SK-N-SH (cell line): ENCODE measurements at regions of chr14 and their contacts with region 1.

Region 1: DNA sequence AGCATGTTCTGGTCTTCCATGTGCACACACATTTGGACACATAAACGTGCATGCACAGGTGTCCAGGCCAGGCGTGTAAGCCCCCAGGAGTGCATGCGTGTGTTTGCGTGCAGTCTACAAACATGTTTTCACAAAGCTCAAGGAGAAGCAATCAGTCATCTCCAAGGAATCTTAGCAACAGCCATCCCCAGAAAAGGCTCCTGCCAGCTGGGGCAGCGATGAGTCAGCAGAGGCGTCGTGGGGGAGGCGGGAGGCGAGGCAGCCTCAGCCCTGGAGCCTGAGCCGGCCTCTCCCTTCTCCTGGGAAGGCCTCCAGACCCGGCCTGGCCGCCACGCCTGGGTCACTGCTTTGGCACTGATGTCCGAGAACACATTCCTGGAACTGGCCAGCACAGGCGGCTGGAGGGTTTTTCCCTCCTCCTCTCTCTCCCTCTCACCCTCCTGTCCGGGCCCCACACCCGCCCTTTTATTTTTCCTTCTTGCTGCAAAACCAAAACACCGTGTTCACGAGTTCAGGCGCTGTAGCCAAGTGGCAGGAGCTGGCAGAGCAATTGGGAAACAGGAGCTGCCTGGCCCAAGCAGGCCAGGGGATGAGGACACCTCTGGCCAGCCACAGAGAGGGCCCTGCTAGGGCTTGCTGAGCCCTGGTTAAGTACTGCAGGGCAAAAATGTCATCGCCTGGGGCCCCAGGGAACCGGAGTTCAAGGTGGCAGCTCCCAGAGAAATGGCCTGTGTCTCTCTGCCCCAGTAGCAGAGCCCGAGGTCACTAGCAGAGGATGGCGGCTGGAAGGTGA is 92.7 kb downstream of the LRRC74A start:
- DNase-seq: peak; percentile 74
- H3K4me3 ChIP-seq: peak overlapping the region; percentile 15 to 47; a peak in 3 of 4 replicates
- H3K27ac ChIP-seq: peak overlapping the region; percentile 100
- H3K4me1 ChIP-seq: peaks cover 67 to 73% of the 10 kb centered on the region in 2 experiments
- H3K27me3 ChIP-seq: no peaks in the 10 kb centered on the region
- CTCF ChIP-seq: peak; percentile 22
- EP300 ChIP-seq: peak; percentile 62 to 90; a peak in 3 of 4 replicates
- RAD21 ChIP-seq: peak; percentile 41

Region 2: DNA sequence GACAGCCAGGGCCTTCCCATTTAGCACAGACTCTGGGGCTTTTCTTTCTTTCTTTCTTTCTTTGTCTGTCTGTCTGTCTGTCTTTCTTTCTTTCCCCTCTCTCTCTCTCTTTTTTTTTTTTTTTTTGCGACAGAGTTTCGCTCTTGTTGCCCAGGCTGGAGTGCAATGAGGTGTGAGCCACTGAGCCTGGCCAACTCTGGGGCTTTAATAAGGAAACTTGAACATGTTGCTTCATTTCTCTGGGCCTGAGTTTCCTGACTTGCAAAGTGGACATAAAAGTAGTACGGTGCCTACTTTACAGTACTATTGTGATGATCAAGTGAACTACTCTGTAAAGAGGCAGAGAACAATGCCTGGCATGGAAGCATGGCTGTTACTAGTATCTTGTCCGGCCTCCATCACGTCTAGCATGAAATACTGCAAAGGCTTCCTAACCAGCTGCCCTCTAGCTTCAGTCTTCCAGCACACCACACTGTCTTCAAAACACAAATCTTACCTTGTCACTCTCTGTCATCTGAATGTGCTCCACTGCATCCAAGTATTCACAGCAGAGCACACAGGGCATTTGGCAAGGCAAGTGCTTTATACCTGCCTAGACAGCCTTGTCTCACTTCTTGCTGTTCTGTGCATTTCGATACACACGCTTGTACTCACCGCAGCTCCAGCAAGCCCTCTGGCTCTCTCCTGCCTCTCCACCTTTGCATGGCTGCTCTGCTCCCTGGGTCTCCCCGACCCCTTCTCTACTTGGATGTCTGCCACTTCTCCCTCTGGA is 12.9 kb after region 1 on chr14:
- CTCF ChIA-PET with region 1: interaction called, 133 read pairs
- POLR2A ChIA-PET with region 1: interaction called, 20 read pairs
- DNase-seq: no peak
- H3K4me3 ChIP-seq: no peak overlapping the region
- H3K27ac ChIP-seq: peak overlapping the region in 1 of 2 experiments; percentile 34; a peak in 1 of 4 replicates
- H3K4me1 ChIP-seq: peaks cover 26 to 45% of the 10 kb centered on the region in 2 experiments; a peak in 3 of 4 replicates
- H3K27me3 ChIP-seq: no peaks in the 10 kb centered on the region
- CTCF ChIP-seq: no peak
- EP300 ChIP-seq: no peak
- RAD21 ChIP-seq: no peak

Region 3: GRCh38 chr14:76956316-76957090 is 37.6 kb after region 1 on chr14:
- CTCF ChIA-PET with region 1: interaction called, 45 read pairs
- POLR2A ChIA-PET with region 1: interaction called, 36 read pairs
- DNase-seq: peak; percentile 91
- H3K4me3 ChIP-seq: peak overlapping the region; percentile 25 to 38; a peak in 3 of 4 replicates
- H3K27ac ChIP-seq: peak overlapping the region; percentile 98 to 99
- H3K4me1 ChIP-seq: peaks cover 68 to 71% of the 10 kb centered on the region in 2 experiments
- H3K27me3 ChIP-seq: no peaks in the 10 kb centered on the region
- CTCF ChIP-seq: 0 out of 2 replicates have a peak, but pooled peaks have one; percentile 8
- EP300 ChIP-seq: peak; percentile 82 to 93; a peak in 3 of 4 replicates
- RAD21 ChIP-seq: 0 out of 2 replicates have a peak, but pooled peaks have one; percentile 9

Region 4: GRCh38 chr14:77028384-77029231 is 109.7 kb after region 1 on chr14 and contains the start of gene IRF2BPL:
- CTCF ChIA-PET with region 1: interaction called, 484 read pairs
- POLR2A ChIA-PET with region 1: interaction called, 41 read pairs
- DNase-seq: peak; percentile 97
- H3K4me3 ChIP-seq: peak within 1 kb of the TSS; percentile 77 to 84
- H3K27ac ChIP-seq: peak within 1 kb of the TSS; percentile 96 to 99
- H3K4me1 ChIP-seq: peaks cover 36 to 41% of the 10 kb centered on the region in 2 experiments
- H3K27me3 ChIP-seq: no peaks in the 10 kb centered on the region
- CTCF ChIP-seq: no peak
- EP300 ChIP-seq: peak; percentile 79; a peak in 3 of 4 replicates
- RAD21 ChIP-seq: peak; percentile 21
- polyA plus RNA-seq, gene IRF2BPL: 10.9 and 17.1 TPM in 2 replicates

Region 5: DNA sequence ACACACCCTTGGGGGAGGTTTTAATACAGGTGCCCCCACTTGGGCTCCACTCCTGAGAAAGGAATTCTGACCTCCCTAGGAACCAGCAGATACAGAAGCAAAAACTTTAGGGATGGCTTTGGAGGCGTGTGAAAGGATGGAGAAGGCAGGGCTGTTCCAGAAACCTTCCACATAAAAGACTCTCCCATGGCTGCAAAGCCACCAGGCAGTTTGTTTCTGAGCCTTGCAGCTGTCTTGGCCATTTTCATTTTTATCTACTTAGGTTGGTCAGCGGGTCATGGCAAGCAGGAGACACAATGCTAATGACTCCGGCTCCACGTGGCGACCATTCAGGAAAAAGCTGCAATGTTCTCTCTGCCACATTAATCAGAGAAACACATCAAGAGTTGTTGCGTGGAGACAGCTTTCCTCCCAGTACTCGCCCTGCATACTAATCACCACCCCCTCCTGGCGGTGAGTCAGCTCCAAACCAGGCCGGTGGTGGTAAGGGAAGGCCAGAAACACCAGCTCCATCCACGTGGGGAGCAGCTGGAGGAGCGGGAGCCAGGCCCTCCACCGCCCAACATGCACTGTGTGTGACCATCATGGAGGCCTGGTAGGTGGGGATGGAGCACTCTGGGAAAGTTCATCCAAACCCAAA is 140.4 kb after region 1 on chr14:
- CTCF ChIA-PET with region 1: interaction called, 484 read pairs
- POLR2A ChIA-PET with region 1: interaction called, 3 read pairs
- DNase-seq: no peak
- H3K4me3 ChIP-seq: no peak overlapping the region
- H3K27ac ChIP-seq: peak overlapping the region in 1 of 2 experiments; percentile 32; a peak in 1 of 4 replicates
- H3K4me1 ChIP-seq: peaks cover 3 to 14% of the 10 kb centered on the region in 2 experiments; a peak in 2 of 4 replicates
- H3K27me3 ChIP-seq: no peaks in the 10 kb centered on the region
- CTCF ChIP-seq: peak; percentile 23; the same call in 1 of the 2 replicates
- EP300 ChIP-seq: peak in 1 of 2 experiments; percentile 56; a peak in 1 of 4 replicates
- RAD21 ChIP-seq: no peak